Activated B cell treated with CpG ODN at 0.5 μM for 24 hours (primary cell): ENCODE measurements at regions of chr6 and their contacts with region 1.

Region 1: GRCh38 chr6:136723780-136724179 is 68.5 kb downstream of the MAP3K5 start:
- DNase-seq: peak; percentile 25
- ATAC-seq: peak; percentile 89
- H3K4me3 Mint-ChIP-seq: peak overlapping the region; percentile 21
- H3K27ac Mint-ChIP-seq: peak overlapping the region; percentile 59
- H3K4me1 Mint-ChIP-seq: peaks cover 54% of the 10 kb centered on the region
- H3K27me3 Mint-ChIP-seq: no peaks in the 10 kb centered on the region
- CTCF ChIP-seq: no peak

Region 2: GRCh38 chr6:136751522-136751956 is 27.8 kb after region 1 on chr6:
- CTCF ChIA-PET with region 1: no interaction called
- POLR2A ChIA-PET with region 1: no interaction called
- intact Hi-C with region 1: loop called (anchors 1 kb)
- DNase-seq: no peak
- ATAC-seq: peak; percentile 93
- H3K4me3 Mint-ChIP-seq: peak overlapping the region; percentile 60
- H3K27ac Mint-ChIP-seq: peak overlapping the region; percentile 82
- H3K4me1 Mint-ChIP-seq: peaks cover 63% of the 10 kb centered on the region
- H3K27me3 Mint-ChIP-seq: no peaks in the 10 kb centered on the region
- CTCF ChIP-seq: no peak

Region 3: DNA sequence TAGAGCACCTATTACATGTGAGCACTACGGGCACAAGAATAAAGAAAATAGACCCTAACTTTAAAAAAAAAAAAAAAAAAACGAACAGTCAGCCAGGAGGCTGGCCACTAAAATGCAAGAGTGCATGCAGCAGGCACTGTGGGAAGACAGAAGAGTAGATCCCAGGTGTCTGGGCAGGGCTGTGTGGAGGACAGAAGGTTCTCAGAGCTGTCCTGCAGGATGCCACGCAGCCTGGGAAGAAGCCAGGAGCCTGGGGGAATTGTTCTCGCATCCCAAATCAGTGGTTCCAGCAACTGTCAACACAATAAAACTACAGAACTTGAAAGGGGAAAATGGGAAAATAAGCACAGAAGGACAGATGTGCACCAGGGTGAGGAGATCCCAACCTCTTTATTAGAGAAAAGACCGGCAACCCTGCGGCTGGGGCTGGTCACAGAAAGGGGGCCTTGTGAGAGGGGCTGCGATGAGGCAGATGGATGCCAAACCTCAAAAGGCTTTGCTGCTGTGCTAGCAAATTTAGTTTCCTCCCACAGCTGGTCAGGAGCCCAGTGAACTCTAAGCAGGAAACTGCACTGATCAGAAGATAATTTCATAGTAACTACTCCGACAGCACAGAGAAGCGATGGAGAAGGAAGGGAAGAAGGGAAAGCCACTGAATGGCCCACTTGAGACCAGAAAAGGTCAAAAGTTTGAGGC is 37.6 kb after region 1 on chr6:
- CTCF ChIA-PET with region 1: interaction called, 4 read pairs
- POLR2A ChIA-PET with region 1: interaction called, 6 read pairs
- intact Hi-C with region 1: loop called (anchors 2 kb)
- DNase-seq: no peak
- ATAC-seq: peak; percentile 26
- H3K4me3 Mint-ChIP-seq: peak overlapping the region; percentile 73
- H3K27ac Mint-ChIP-seq: peak overlapping the region; percentile 84
- H3K4me1 Mint-ChIP-seq: peaks cover 67% of the 10 kb centered on the region
- H3K27me3 Mint-ChIP-seq: no peaks in the 10 kb centered on the region
- CTCF ChIP-seq: no peak